ENCODE measurements at regions of chr5 and their contacts with region 1.

Region 1: GRCh38 chr5:34053133-34053532 is 10.1 kb upstream of the C1QTNF3 start:
- DNase-seq: peak; percentile 89
- ATAC-seq: peak; percentile 97
- H3K4me3 ChIP-seq: peak overlapping the region; percentile 20; the same call in 1 of the 2 replicates
- H3K27ac ChIP-seq: peak overlapping the region; percentile 85
- H3K4me1 ChIP-seq: peaks cover 28% of the 10 kb centered on the region
- H3K27me3 ChIP-seq: no peaks in the 10 kb centered on the region
- CTCF ChIP-seq: no peak

Region 2: DNA sequence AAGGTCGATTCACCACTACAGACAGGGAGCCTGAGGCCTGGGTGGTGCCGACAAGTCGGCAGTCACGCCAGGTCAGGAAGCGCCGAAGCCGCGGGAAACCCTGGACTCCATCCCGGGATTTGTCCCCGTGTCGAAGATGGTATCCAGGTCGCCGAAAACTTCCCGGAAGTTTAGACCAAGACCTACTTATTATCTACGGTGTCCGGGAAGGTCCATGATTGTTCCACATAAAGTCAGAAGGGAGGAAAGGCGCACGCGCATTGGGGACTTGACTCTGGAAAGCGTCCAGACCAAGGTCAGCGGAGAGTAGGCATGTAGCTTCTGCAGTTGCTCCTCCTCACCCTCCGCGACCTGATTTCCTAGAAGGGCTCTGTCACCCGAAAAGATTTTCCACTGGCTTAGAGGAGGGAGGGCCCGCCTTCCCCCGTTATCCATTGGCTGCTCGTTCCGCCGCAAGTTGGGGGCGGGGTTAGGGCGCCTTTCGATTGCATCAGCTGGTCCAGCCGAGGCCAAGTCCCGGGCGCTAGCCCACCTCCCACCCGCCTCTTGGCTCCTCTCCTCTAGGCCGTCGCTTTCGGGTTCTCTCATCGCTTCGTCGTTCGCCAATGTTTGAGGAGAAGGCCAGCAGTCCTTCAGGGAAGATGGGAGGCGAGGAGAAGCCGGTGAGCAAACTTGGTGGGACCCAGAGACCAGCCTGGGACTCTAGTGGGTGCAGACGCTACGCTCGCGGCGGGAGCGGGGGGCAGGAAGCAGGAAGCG is 612.5 kb before region 1 on chr5 and contains the start of gene TARS1:
- CTCF ChIA-PET with region 1: no interaction called
- POLR2A ChIA-PET with region 1: no interaction called
- intact Hi-C with region 1: loop called (anchors 1 kb)
- DNase-seq: peak; percentile 100
- ATAC-seq: peak; percentile 94
- H3K4me3 ChIP-seq: peak within 1 kb of the TSS; percentile 92
- H3K27ac ChIP-seq: peak within 1 kb of the TSS; percentile 83
- H3K4me1 ChIP-seq: peaks cover 24% of the 10 kb centered on the region
- H3K27me3 ChIP-seq: no peaks in the 10 kb centered on the region
- CTCF ChIP-seq: no peak
- total RNA-seq, gene TARS1: 184 and 221 TPM in 2 replicates

Region 3: DNA sequence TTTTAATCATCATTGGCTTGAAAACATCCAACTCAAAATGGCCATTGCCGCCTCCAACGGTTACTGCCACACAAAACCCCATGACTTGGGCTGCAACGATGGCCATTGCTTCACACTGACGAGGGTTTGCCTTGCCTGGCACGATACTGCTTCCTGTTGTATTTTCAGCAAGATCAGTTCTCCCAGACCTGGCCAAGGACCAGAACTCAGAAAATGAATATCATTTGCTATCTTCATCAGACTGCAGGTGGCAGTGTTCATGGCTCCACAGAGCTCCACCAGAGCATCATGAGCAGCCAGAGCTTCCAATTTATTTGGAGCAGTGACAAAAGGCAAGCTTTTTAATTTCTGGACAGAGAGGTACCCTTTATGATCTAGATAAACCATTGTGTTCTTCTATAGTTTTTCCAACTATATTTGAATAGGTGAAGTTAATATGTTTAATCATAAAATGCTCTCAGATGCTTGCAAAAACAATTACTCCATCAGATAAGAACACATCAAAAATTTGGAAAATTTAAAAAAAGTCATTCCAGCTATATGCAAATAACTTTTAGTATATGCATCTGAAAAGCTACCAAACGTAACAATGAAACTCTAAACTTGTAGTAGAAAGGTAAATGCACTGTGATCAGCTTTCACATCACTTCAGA is 55.7 kb before region 1 on chr5:
- CTCF ChIA-PET with region 1: no interaction called
- POLR2A ChIA-PET with region 1: interaction called, 7 read pairs
- intact Hi-C with region 1: loop called (anchors 1 kb)
- DNase-seq: peak; percentile 88
- ATAC-seq: peak; percentile 49
- H3K4me3 ChIP-seq: no peak overlapping the region
- H3K27ac ChIP-seq: no peak overlapping the region
- H3K4me1 ChIP-seq: peaks cover 21% of the 10 kb centered on the region
- H3K27me3 ChIP-seq: no peaks in the 10 kb centered on the region
- CTCF ChIP-seq: peak; percentile 87

Region 4: GRCh38 chr5:34007621-34008600 is 45.2 kb before region 1 on chr5 and contains the start of gene AMACR:
- CTCF ChIA-PET with region 1: no interaction called
- POLR2A ChIA-PET with region 1: interaction called, 24 read pairs
- intact Hi-C with region 1: loop called (anchors 2 kb)
- DNase-seq: peak; percentile 97
- ATAC-seq: peak; percentile 90
- H3K4me3 ChIP-seq: peak within 1 kb of the TSS; percentile 82
- H3K27ac ChIP-seq: peak within 1 kb of the TSS; percentile 74
- H3K4me1 ChIP-seq: peaks cover 28% of the 10 kb centered on the region
- H3K27me3 ChIP-seq: no peaks in the 10 kb centered on the region
- CTCF ChIP-seq: no peak
- total RNA-seq, gene AMACR: 12.3 and 12.7 TPM in 2 replicates

Measured in PC-3 (cell line).